Endothelial cell of umbilical vein (primary cell): ENCODE measurements at regions of chr17 and their contacts with region 1.

Region 1: GRCh38 chr17:48002266-48002915 is 31.5 kb downstream of the CDK5RAP3 start:
- DNase-seq: peak; percentile 85
- H3K4me3 ChIP-seq: no peak overlapping the region
- H3K27ac ChIP-seq: peak overlapping the region; percentile 84
- H3K4me1 ChIP-seq: peaks cover 30% of the 10 kb centered on the region
- H3K27me3 ChIP-seq: no peaks in the 10 kb centered on the region
- CTCF ChIP-seq: no peak
- POLR2A ChIP-seq: peak; percentile 73

Region 2: GRCh38 chr17:47978324-47978723 is 24.1 kb before region 1 on chr17:
- CTCF ChIA-PET with region 1: interaction called, 11 read pairs
- POLR2A ChIA-PET with region 1: no interaction called
- dilution Hi-C with region 1: no loop called
- intact Hi-C with region 1: no loop called
- DNase-seq: peak; percentile 48
- H3K4me3 ChIP-seq: no peak overlapping the region
- H3K27ac ChIP-seq: no peak overlapping the region
- H3K4me1 ChIP-seq: no peaks in the 10 kb centered on the region
- H3K27me3 ChIP-seq: no peaks in the 10 kb centered on the region
- CTCF ChIP-seq: peak; percentile 75 to 83
- POLR2A ChIP-seq: no peak